ENCODE measurements at regions of chr5 and their contacts with region 1.

Region 1: DNA sequence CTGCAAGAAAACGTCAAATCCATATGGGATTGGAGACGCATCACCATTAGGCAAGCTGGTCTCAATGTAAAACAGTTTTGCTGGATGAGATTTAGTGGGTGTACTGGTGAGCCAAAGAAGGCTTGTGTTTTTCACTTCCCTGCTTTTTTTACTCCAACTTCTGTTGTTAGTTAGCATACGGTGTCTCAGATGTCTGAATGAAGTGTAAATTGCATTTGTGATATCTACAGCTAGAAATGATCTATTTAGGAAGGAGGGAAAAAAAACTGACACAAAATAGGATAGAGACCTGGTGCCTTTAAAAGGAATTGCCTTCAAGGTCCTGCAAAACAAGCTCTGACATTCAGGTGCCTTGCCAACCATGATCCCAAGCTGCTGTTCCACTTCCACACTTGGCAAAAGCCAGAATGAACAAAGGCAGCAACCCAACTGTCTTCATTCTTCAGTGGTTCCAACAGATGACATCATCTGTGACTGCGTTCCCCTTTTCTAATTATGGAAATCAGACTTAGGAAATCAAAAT is 104.2 kb upstream of the RAI14 start:
- DNase-seq: peak; percentile 75
- H3K4me3 ChIP-seq: no peak overlapping the region
- H3K27ac ChIP-seq: peak overlapping the region; percentile 42 to 80 (median 72)
- H3K4me1 ChIP-seq: peaks cover 0 to 29% (median 17%) of the 10 kb centered on the region in 4 donors
- H3K27me3 ChIP-seq: no peaks in the 10 kb centered on the region
- CTCF ChIP-seq: no peak
- EP300 ChIP-seq: peak in 1 of 4 donors; percentile 68
- POLR2A ChIP-seq: no peak

Region 2: DNA sequence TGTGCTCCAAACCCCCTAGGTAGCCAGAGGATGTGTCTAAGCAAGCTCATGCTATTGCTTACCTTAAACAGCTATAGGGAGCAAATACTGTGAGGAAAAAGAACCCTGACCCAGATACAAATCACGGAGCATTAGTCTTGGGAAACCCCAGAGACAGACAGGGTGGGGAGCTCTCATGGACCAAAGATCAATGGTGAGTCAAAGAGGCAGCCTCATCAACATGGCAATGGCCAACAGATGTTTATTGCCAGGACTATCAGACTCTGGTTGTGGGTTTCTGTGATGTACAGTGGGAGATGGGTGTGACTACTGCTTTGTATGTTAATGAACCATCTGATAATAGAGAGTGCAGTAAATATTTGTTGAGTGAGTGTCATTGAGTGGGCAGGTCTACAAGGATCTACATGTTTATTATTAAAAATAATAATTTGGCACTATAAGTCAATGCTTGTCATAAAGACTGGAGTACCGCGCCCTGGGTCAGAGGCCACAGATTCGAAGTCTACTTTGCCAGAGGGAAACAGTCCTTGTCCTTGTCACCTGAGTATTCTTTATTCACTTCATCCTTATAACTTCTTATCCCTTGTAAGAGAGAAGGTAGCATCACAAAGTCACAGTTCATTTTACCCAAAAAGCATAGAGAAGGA is 47.6 kb after region 1 on chr5:
- intact Hi-C with region 1: loop called (anchors 5 kb)
- DNase-seq: no peak
- H3K4me3 ChIP-seq: no peak overlapping the region
- H3K27ac ChIP-seq: no peak overlapping the region
- H3K4me1 ChIP-seq: peaks cover 0 to 27% (median 25%) of the 10 kb centered on the region in 4 donors
- H3K27me3 ChIP-seq: no peaks in the 10 kb centered on the region
- CTCF ChIP-seq: no peak
- EP300 ChIP-seq: no peak
- POLR2A ChIP-seq: no peak

Region 3: DNA sequence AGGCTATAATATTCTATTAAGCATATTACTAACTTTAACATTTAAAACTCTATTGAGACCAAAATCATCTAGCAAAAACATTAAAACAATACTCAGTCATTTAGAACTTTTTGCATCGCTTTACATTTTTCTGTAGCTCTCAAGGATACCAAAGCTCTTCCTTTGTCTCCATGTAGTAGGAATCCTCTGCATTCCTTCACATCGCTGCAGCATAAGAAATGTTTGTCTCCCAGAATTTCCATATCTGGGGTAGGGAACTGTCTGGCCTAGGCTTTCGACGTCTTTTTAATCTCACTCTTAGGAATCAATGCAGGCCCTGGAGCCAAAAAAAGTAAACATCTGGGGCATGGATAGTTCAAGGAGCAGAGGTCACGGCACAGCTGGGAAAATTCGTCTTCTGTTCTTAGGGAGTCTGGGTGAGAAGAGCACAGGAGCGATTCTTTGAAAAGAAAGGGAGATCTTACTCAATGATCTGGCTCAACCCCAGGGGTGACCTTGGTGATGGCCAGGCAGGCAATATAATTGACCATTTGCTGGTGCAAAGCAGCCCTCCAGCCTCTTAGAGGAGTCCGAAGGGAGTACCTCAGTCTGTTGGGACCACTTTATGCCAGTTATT is 80.9 kb after region 1 on chr5:
- intact Hi-C with region 1: no loop called
- DNase-seq: no peak
- H3K4me3 ChIP-seq: no peak overlapping the region
- H3K27ac ChIP-seq: no peak overlapping the region
- H3K4me1 ChIP-seq: no peaks in the 10 kb centered on the region
- H3K27me3 ChIP-seq: no peaks in the 10 kb centered on the region
- CTCF ChIP-seq: no peak
- EP300 ChIP-seq: no peak
- POLR2A ChIP-seq: no peak

Measured in sigmoid colon (tissue), 7 donors.